ENCODE measurements at regions of chr3 and their contacts with region 1.

Region 1: GRCh38 chr3:189786479-189787064 is 155.4 kb downstream of the TP63 start:
- DNase-seq: no peak
- H3K4me3 Mint-ChIP-seq: no peak overlapping the region
- H3K27ac Mint-ChIP-seq: no peak overlapping the region
- H3K4me1 Mint-ChIP-seq: peaks cover 5% of the 10 kb centered on the region
- H3K27me3 Mint-ChIP-seq: no peaks in the 10 kb centered on the region
- CTCF ChIP-seq: peak; percentile 20

Region 2: GRCh38 chr3:189563866-189564563 is 222.6 kb before region 1 on chr3:
- CTCF ChIA-PET with region 1: no interaction called
- POLR2A ChIA-PET with region 1: no interaction called
- intact Hi-C with region 1: no loop called
- DNase-seq: peak; percentile 92
- H3K4me3 Mint-ChIP-seq: no peak overlapping the region
- H3K27ac Mint-ChIP-seq: peak overlapping the region; percentile 69
- H3K4me1 Mint-ChIP-seq: peaks cover 26% of the 10 kb centered on the region
- H3K27me3 Mint-ChIP-seq: no peaks in the 10 kb centered on the region
- CTCF ChIP-seq: no peak

Region 3: DNA sequence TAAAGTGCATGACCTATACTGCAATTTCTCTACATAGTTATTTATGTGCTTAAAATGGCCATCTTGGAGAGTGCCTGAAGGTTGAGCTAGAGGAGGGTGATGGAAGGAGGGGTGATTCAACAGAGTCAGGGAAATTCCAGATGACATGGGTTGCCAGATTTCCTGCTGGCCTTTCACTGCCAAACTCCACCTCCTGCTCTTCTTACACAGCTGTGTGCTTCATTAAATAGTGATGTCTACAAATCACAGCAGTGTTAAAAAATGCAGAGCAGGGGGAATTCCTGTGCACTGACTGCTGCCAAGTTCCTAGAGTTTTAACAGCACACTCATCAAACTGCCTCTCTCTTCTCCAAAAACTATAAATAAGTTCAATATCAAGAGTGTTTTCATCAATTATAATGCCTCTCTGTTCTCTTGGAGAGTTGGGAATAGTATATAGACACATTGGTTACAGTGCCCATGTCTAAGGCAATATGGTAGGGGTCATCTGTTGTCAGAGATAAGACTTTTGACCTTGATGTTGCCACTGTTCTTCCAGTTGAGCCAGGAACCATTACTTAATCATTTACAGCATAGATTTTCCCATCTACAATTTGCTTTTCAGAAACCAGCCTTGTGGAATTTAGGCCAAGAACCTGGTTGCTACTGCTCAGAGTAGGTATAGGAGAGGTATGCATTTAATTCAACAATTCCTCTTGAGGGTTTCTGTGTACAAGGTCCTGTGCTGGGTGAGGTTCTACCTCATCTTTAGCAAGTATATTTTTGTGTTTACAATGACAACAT is 75.8 kb before region 1 on chr3:
- CTCF ChIA-PET with region 1: no interaction called
- POLR2A ChIA-PET with region 1: interaction called, 19 read pairs
- intact Hi-C with region 1: no loop called
- DNase-seq: peak; percentile 95
- H3K4me3 Mint-ChIP-seq: no peak overlapping the region
- H3K27ac Mint-ChIP-seq: peak overlapping the region; percentile 35
- H3K4me1 Mint-ChIP-seq: peaks cover 31% of the 10 kb centered on the region
- H3K27me3 Mint-ChIP-seq: no peaks in the 10 kb centered on the region
- CTCF ChIP-seq: no peak

Region 4: GRCh38 chr3:189799366-189799765 is 12.8 kb after region 1 on chr3:
- CTCF ChIA-PET with region 1: interaction called, 4 read pairs
- POLR2A ChIA-PET with region 1: interaction called, 19 read pairs
- intact Hi-C with region 1: no loop called
- DNase-seq: no peak
- H3K4me3 Mint-ChIP-seq: no peak overlapping the region
- H3K27ac Mint-ChIP-seq: peak overlapping the region; percentile 6
- H3K4me1 Mint-ChIP-seq: peaks cover 24% of the 10 kb centered on the region
- H3K27me3 Mint-ChIP-seq: no peaks in the 10 kb centered on the region
- CTCF ChIP-seq: no peak

Region 5: DNA sequence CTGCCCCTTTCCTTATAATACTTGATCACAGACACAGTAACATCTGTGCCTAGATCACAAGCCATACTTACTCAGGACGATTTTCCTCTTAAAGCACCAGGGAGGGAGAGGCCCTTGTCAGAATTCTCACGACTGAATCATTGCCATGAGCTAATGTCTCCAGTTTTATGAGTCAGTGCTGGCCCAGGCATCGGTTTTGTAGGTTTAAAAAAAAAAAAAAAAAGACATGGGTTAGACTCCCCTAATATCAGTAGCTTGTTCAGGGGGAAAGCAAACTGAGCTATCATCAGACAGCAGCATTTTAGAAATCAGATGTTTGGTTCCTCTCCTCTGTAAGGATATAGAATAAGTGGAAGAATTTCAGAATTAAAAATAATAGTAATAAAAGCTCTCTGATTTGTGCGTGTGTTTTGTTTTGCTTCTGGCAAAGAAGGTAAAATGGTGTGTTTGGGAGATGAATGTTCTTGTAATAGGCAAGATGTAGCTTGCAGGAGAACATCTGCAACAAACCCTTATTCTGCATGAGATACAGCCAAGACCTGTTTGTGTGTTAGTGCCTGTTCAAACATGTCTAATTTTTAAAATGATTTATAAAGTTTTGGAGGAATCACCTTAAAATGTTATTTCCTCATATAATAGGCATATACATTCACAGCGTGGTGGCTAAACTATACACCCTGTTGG is 38.2 kb after region 1 on chr3:
- CTCF ChIA-PET with region 1: no interaction called
- POLR2A ChIA-PET with region 1: interaction called, 48 read pairs
- intact Hi-C with region 1: no loop called
- DNase-seq: peak; percentile 96
- H3K4me3 Mint-ChIP-seq: peak overlapping the region; percentile 42
- H3K27ac Mint-ChIP-seq: peak overlapping the region; percentile 83
- H3K4me1 Mint-ChIP-seq: peaks cover 31% of the 10 kb centered on the region
- H3K27me3 Mint-ChIP-seq: no peaks in the 10 kb centered on the region
- CTCF ChIP-seq: no peak

Region 6: DNA sequence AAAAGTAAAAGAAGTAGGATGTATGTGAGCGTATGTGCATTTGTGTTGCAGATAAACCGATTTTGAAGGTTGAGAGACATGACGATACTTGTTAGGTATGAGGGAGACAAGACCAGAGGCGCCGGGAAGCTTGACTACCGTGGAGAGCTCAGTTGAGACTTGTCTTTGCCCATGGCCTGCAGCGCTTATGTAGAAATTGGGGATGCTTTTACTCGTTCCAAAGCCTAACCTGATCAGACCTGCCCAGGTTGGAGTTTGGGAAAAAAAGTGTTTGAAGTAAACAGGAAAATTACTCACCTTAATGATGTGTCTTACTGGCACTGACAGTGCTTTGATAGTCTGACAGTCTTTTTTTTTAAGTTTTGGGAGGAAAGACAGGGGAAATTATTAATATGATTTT is 47.4 kb after region 1 on chr3:
- CTCF ChIA-PET with region 1: no interaction called
- POLR2A ChIA-PET with region 1: interaction called, 86 read pairs
- intact Hi-C with region 1: loop called (anchors 5 kb)
- DNase-seq: peak; percentile 99
- H3K4me3 Mint-ChIP-seq: peak overlapping the region; percentile 26
- H3K27ac Mint-ChIP-seq: peak overlapping the region; percentile 37
- H3K4me1 Mint-ChIP-seq: peaks cover 41% of the 10 kb centered on the region
- H3K27me3 Mint-ChIP-seq: no peaks in the 10 kb centered on the region
- CTCF ChIP-seq: no peak

Measured in MCF 10A (cell line).